Activated CD4-positive, alpha-beta T cell treated with anti-CD3 and anti-CD28 coated beads, Interleukin-2, amount 10 ng/mL, durations not matched to agents 24 days and 14 days (primary cell): ENCODE measurements at regions of chr19 and their contacts with region 1.

Region 1: GRCh38 chr19:10653715-10654492 is at the start of gene ILF3:
- DNase-seq: peak; percentile 100
- H3K4me3 Mint-ChIP-seq: peak within 1 kb of the TSS; percentile 99
- H3K27ac Mint-ChIP-seq: peak within 1 kb of the TSS; percentile 99
- H3K4me1 Mint-ChIP-seq: peaks cover 27% of the 10 kb centered on the region
- H3K27me3 Mint-ChIP-seq: peaks cover 2% of the 10 kb centered on the region
- total RNA-seq, gene ILF3: 588 TPM in 2 replicates

Region 2: GRCh38 chr19:10194500-10195289 is 459.2 kb before region 1 on chr19 and contains the start of gene DNMT1:
- intact Hi-C with region 1: loop called (anchors 10 kb)
- DNase-seq: peak; percentile 99
- H3K4me3 Mint-ChIP-seq: peak within 1 kb of the TSS; percentile 93
- H3K27ac Mint-ChIP-seq: peak within 1 kb of the TSS; percentile 97
- H3K4me1 Mint-ChIP-seq: peaks cover 35% of the 10 kb centered on the region
- H3K27me3 Mint-ChIP-seq: no peaks in the 10 kb centered on the region
- total RNA-seq, gene DNMT1: 410 and 414 TPM in 2 replicates

Region 3: GRCh38 chr19:10416380-10417257 is 237.3 kb before region 1 on chr19:
- intact Hi-C with region 1: loop called (anchors 5 kb)
- DNase-seq: peak; percentile 99
- H3K4me3 Mint-ChIP-seq: peak overlapping the region; percentile 86
- H3K27ac Mint-ChIP-seq: peak overlapping the region; percentile 96
- H3K4me1 Mint-ChIP-seq: peaks cover 53% of the 10 kb centered on the region
- H3K27me3 Mint-ChIP-seq: peaks cover 8% of the 10 kb centered on the region

Region 4: GRCh38 chr19:10602330-10603083 is 51.4 kb before region 1 on chr19:
- intact Hi-C with region 1: loop called (anchors 1 kb)
- DNase-seq: peak; percentile 95
- H3K4me3 Mint-ChIP-seq: peak overlapping the region; percentile 99
- H3K27ac Mint-ChIP-seq: peak overlapping the region; percentile 100
- H3K4me1 Mint-ChIP-seq: peaks cover 19% of the 10 kb centered on the region
- H3K27me3 Mint-ChIP-seq: peaks cover 12% of the 10 kb centered on the region

Region 5: GRCh38 chr19:11090054-11090900 is 436.4 kb after region 1 on chr19:
- intact Hi-C with region 1: loop called (anchors 10 kb)
- DNase-seq: peak; percentile 99
- H3K4me3 Mint-ChIP-seq: peak overlapping the region; percentile 97
- H3K27ac Mint-ChIP-seq: peak overlapping the region; percentile 100
- H3K4me1 Mint-ChIP-seq: peaks cover 36% of the 10 kb centered on the region
- H3K27me3 Mint-ChIP-seq: no peaks in the 10 kb centered on the region